Right ventricle myocardium inferior (tissue), 1 donor: ENCODE measurements at regions of chr5 and their contacts with region 1.

Region 1: DNA sequence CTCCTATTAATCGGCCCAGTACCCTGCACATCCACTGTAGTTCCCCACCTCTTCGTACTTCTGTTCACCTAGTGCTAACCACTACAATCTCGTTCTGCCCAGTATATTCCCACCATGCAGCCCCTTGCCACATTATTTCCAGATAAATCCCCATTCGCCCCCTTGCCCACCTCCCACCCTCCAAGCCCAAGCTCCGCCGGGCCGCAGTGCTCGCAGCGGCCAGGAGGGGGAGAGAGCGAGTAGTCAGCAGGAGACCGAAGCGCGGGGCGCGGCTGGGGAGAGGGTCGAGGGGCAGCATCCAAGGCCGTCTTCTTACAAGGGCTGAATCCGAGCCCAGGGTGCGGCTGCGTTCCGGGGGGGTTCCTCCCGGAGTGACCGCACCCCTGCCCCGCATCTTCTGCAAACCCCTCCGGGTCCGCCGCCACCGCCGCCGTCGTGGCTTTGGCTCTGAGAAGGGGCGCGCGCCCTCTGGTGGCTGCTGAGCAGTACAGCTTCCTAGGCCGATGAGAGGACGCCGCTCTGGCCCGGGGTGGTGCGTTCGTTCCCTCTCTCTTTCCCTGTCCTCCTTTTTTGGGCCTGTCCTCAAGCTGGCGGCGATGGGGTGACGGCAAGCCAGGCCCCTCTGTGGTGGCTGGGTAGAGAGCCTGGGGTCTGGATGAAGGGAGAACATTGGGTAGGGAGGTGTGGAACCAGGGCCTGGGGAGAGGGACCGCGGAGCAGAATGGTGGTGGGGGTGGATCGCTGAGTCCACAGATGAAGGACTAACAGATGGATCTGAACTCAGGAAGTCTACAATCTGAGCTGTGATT is 30.0 kb upstream of the PSD2 start:
- DNase-seq: peak; percentile 94
- ATAC-seq: peak; percentile 88

Region 2: GRCh38 chr5:139648205-139649081 is 117.2 kb before region 1 on chr5 and contains the start of gene CXXC5:
- intact Hi-C with region 1: no loop called
- DNase-seq: peak; percentile 89
- ATAC-seq: peak; percentile 77
- total RNA-seq, gene CXXC5: 74.1 TPM

Region 3: GRCh38 chr5:139696894-139697658 is 68.5 kb before region 1 on chr5:
- intact Hi-C with region 1: loop called (anchors 5 kb)
- DNase-seq: peak; percentile 90
- ATAC-seq: peak; percentile 86

Region 4: GRCh38 chr5:139711067-139711905 is 54.3 kb before region 1 on chr5:
- intact Hi-C with region 1: loop called (anchors 5 kb)
- DNase-seq: no peak
- ATAC-seq: peak; percentile 30

Region 5: GRCh38 chr5:139847790-139848507 is 82.3 kb after region 1 on chr5:
- intact Hi-C with region 1: no loop called
- DNase-seq: peak; percentile 83
- ATAC-seq: peak; percentile 72